WTC11 (cell line): ENCODE measurements at regions of chr3 and their contacts with region 1.

Region 1: DNA sequence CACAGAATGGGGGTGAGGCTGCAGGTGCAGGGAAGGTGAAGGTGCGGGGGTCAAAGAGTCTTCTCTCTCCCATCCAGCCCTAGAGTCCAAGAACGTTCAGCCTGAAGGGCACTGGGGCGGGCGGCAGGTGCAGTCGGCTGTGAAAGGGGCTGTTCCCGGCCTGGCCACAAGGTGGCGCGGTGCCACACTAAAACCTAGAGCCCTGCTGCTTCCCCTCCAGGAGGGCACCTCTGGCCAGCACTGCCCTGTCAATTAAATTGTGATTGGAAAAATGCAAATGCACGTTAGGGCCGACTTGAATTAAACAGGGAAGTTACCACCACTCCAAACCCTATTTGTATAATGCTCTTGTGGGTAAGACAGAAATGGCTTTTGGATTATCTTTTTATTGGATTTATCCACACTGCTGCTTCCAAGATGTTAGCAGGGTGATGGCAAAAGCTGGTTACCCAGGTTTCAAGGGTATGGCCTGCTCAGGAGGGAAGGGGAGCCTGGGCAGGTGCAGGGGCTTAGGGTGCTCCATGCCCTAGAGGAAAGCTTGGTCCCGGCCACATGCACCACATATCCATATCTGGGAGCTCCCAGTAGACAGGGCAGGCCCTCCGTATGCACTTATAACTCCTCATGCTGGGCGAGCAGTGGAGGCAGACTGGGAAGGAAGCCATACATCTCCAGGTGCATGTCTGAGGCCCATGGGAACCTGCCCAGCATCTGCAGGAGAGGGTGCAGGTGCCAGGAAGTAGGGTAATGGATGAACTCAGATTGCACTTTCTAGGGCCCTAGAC is 119.8 kb downstream of the ADCY5 start:
- DNase-seq: peak; percentile 90
- ATAC-seq: peak; percentile 86
- H3K4me3 Mint-ChIP-seq: no peak overlapping the region
- H3K27ac Mint-ChIP-seq: no peak overlapping the region
- H3K4me1 Mint-ChIP-seq: peaks cover 20% of the 10 kb centered on the region
- H3K27me3 Mint-ChIP-seq: no peaks in the 10 kb centered on the region
- CTCF ChIP-seq: peak; percentile 94

Region 2: GRCh38 chr3:122993124-122993978 is 335.7 kb before region 1 on chr3:
- CTCF ChIA-PET with region 1: no interaction called
- POLR2A ChIA-PET with region 1: no interaction called
- DNase-seq: no peak
- ATAC-seq: peak; percentile 31
- H3K4me3 Mint-ChIP-seq: no peak overlapping the region
- H3K27ac Mint-ChIP-seq: no peak overlapping the region
- H3K4me1 Mint-ChIP-seq: peaks cover 41% of the 10 kb centered on the region
- H3K27me3 Mint-ChIP-seq: no peaks in the 10 kb centered on the region
- CTCF ChIP-seq: no peak

Region 3: GRCh38 chr3:123046262-123047061 is 282.6 kb before region 1 on chr3:
- CTCF ChIA-PET with region 1: no interaction called
- POLR2A ChIA-PET with region 1: no interaction called
- DNase-seq: no peak
- ATAC-seq: no peak
- H3K4me3 Mint-ChIP-seq: no peak overlapping the region
- H3K27ac Mint-ChIP-seq: no peak overlapping the region
- H3K4me1 Mint-ChIP-seq: peaks cover 20% of the 10 kb centered on the region
- H3K27me3 Mint-ChIP-seq: no peaks in the 10 kb centered on the region
- CTCF ChIP-seq: no peak

Region 4: GRCh38 chr3:123267821-123268220 is 61.2 kb before region 1 on chr3:
- CTCF ChIA-PET with region 1: no interaction called
- POLR2A ChIA-PET with region 1: no interaction called
- DNase-seq: no peak
- ATAC-seq: no peak
- H3K4me3 Mint-ChIP-seq: no peak overlapping the region
- H3K27ac Mint-ChIP-seq: no peak overlapping the region
- H3K4me1 Mint-ChIP-seq: peaks cover under 1% of the 10 kb centered on the region; the same call in 1 of the 2 replicates
- H3K27me3 Mint-ChIP-seq: no peaks in the 10 kb centered on the region
- CTCF ChIP-seq: no peak

Region 5: DNA sequence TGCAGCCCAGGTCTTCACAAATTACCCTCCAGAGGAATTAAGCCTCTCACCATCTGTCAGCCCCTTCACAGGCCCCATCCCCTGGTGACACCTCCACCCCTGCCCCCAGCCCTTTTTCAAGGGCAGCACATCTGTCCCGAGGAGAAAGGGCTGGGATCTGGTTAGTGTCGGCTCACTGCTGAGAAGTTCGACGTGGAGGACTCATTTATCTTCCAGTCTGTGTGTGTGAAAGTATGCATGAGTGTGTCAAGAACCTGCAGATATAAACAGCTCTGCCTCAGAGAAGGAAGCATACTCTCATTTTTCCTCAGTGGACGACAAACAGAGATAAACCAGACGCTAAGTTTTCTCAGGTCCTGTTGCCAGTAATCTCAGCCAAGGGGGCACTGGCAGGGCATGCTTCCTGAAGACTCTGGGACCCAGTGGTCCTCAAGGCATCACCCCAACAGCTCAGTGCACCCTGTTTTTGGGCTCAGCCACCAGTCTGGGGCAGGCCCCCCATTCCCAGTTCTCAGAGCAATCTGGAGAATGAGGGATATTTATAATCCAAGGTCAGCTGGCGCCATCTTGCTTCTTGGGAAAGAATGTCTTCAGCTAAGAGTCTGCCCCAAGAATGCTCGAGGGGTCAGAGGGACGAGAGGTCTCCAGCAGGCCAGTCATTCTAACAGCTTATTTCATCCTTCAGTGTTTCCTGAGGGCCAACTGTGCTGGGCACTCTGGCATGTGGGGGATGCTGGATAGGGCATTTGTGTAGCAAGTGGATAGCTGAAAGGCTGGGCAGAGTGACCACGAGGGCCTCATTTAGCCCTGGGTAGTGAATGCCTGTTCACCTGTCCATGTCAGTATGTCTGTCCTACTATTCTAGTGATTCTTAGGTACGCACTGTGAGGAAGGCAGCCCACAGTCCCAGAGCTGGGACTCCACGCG is 46.2 kb after region 1 on chr3:
- CTCF ChIA-PET with region 1: interaction called, 10 read pairs
- POLR2A ChIA-PET with region 1: no interaction called
- DNase-seq: peak; percentile 46
- ATAC-seq: peak; percentile 66
- H3K4me3 Mint-ChIP-seq: no peak overlapping the region
- H3K27ac Mint-ChIP-seq: no peak overlapping the region
- H3K4me1 Mint-ChIP-seq: no peaks in the 10 kb centered on the region
- H3K27me3 Mint-ChIP-seq: no peaks in the 10 kb centered on the region
- CTCF ChIP-seq: no peak

Region 6: GRCh38 chr3:123489400-123490004 is 160.5 kb after region 1 on chr3:
- CTCF ChIA-PET with region 1: interaction called, 15 read pairs
- POLR2A ChIA-PET with region 1: no interaction called
- DNase-seq: peak; percentile 86
- ATAC-seq: peak; percentile 95
- H3K4me3 Mint-ChIP-seq: no peak overlapping the region
- H3K27ac Mint-ChIP-seq: no peak overlapping the region
- H3K4me1 Mint-ChIP-seq: no peaks in the 10 kb centered on the region
- H3K27me3 Mint-ChIP-seq: no peaks in the 10 kb centered on the region; the same call in 1 of the 2 replicates
- CTCF ChIP-seq: peak; percentile 74